Activated CD8-positive, alpha-beta T cell treated with anti-CD3 and anti-CD28 coated beads, Interleukin-2, amount 10 ng/mL, durations not matched to agents 7 days and 5 days (primary cell): ENCODE measurements at regions of chr11 and their contacts with region 1.

Region 1: DNA sequence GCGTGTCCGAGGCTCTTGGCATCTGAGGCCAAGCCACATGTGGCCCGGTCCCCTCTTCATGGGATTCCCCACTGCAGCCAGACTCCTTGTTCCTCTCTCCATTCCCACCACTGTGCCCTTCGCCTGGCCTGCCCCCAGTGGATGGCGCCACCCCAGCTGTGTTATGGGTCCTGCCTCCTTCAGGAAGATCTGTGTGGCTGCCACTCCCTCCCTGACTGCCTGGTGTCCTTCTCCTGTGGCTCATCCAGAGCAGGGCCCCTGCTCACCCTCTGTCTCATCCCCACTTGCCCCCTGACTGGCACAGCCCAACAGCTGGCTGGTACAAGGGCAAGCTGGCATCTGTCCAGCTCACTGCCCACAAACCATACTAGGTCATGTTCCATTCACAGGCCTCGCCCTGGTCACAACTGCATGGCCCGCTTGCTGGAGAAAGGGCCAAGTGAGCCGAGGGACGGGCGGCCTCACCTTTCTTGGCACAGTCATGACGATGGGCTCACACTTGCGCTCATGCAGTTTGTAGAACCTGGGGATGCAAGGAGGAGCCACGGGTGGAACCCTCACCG is 1.9 kb upstream of the PTPRCAP start:
- DNase-seq: peak; percentile 61
- ATAC-seq: no peak
- H3K4me3 Mint-ChIP-seq: peak overlapping the region; percentile 84
- H3K27ac Mint-ChIP-seq: peak overlapping the region; percentile 96
- H3K4me1 Mint-ChIP-seq: peaks cover 56% of the 10 kb centered on the region
- H3K27me3 Mint-ChIP-seq: no peaks in the 10 kb centered on the region

Region 2: DNA sequence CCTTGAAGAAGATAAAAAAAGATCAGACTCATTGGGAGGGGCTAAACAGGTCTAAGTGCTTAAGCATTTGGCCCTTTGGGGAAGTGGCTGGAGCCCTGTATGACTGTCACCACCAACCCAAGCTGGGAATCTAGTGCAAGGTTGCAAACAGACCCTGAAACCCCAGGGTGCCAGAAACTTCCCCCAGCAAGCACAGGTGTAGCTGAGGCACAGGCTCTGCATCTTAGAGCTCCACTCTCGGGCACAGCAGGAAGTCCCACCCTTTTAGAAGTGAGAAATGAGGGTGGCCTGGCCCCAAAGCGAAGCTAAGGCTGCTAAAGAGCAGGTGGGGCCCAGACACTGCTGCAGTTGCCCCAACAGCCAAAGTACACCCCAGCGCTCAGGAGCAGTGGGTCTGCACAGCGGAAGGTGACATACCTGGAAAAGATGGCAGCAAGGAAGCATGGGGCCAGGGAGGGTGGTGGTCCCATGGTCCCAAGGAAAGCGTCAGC is 326.1 kb before region 1 on chr11:
- CTCF ChIA-PET with region 1: no interaction called
- POLR2A ChIA-PET with region 1: no interaction called
- DNase-seq: peak; percentile 29
- ATAC-seq: no peak
- H3K4me3 Mint-ChIP-seq: no peak overlapping the region
- H3K27ac Mint-ChIP-seq: peak overlapping the region; percentile 52
- H3K4me1 Mint-ChIP-seq: peaks cover 20% of the 10 kb centered on the region
- H3K27me3 Mint-ChIP-seq: peaks cover 2% of the 10 kb centered on the region

Region 3: DNA sequence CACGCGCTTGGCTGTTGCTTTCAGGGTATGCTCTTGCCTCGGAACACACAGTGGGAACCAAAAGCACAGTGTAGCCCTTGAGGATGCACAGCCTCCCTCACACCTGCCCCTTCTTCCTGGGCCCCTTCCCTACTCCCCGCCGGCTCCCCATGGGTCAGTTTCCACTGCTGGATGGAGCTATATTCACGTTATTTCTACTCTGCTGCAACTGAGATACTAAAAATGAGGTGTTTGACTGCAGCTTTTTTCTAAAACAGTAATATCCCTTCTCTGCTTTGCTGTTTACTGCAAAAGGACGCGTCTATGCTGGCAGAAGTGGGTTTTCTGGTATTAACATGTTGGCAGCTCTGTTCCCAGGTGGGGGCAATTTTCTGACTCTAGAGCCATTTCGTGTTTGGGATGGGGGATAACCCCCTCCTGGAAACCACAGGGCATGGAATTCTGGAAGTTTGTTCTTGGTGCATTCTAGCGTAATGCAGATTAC is 168.3 kb before region 1 on chr11:
- CTCF ChIA-PET with region 1: no interaction called
- POLR2A ChIA-PET with region 1: no interaction called
- DNase-seq: no peak
- ATAC-seq: no peak
- H3K4me3 Mint-ChIP-seq: peak overlapping the region; percentile 98
- H3K27ac Mint-ChIP-seq: peak overlapping the region; percentile 99
- H3K4me1 Mint-ChIP-seq: peaks cover 72% of the 10 kb centered on the region
- H3K27me3 Mint-ChIP-seq: no peaks in the 10 kb centered on the region

Region 4: DNA sequence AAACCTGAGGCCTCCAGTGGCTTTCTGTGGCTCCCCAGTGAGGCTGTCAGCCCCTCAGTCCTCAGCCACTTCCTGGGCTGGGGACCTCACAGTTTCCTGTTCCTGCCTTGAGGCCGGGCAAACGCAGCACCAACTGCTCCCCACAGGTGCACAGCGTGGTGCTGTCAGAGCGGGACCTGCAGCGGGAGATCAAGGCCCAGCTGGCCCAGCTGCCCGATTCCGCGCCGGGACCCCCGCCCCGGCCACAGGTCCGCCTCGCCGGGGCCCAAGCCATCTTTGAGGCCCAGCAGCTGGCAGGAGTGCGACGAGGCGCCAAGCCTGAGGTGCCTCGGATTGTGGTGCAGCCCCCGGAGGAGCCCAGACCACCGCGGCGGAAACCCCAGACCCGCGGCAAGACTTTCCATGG is 30.1 kb before region 1 on chr11:
- CTCF ChIA-PET with region 1: interaction called, 8 read pairs
- POLR2A ChIA-PET with region 1: interaction called, 109 read pairs
- DNase-seq: peak; percentile 93
- ATAC-seq: peak; percentile 72
- H3K4me3 Mint-ChIP-seq: peak overlapping the region; percentile 92
- H3K27ac Mint-ChIP-seq: peak overlapping the region; percentile 98
- H3K4me1 Mint-ChIP-seq: peaks cover 80% of the 10 kb centered on the region
- H3K27me3 Mint-ChIP-seq: peaks cover 2% of the 10 kb centered on the region

Region 5: GRCh38 chr11:67428052-67428914 is 11.1 kb before region 1 on chr11 and contains the start of gene RPS6KB2:
- CTCF ChIA-PET with region 1: interaction called, 6 read pairs
- POLR2A ChIA-PET with region 1: interaction called, 44 read pairs
- DNase-seq: peak; percentile 100
- ATAC-seq: peak; percentile 94
- H3K4me3 Mint-ChIP-seq: peak within 1 kb of the TSS; percentile 98
- H3K27ac Mint-ChIP-seq: peak within 1 kb of the TSS; percentile 95
- H3K4me1 Mint-ChIP-seq: peaks cover 61% of the 10 kb centered on the region
- H3K27me3 Mint-ChIP-seq: no peaks in the 10 kb centered on the region
- total RNA-seq, gene RPS6KB2: 64.0 to 66.9 TPM

Region 6: GRCh38 chr11:67468835-67469811 is 29.7 kb after region 1 on chr11 and contains the start of gene TMEM134:
- CTCF ChIA-PET with region 1: interaction called, 21 read pairs
- POLR2A ChIA-PET with region 1: interaction called, 103 read pairs
- DNase-seq: peak; percentile 92
- ATAC-seq: peak; percentile 79
- H3K4me3 Mint-ChIP-seq: peak within 1 kb of the TSS; percentile 87
- H3K27ac Mint-ChIP-seq: peak within 1 kb of the TSS; percentile 83
- H3K4me1 Mint-ChIP-seq: peaks cover 37% of the 10 kb centered on the region
- H3K27me3 Mint-ChIP-seq: no peaks in the 10 kb centered on the region
- total RNA-seq, gene TMEM134: 39.6 to 42.5 TPM

Region 7: GRCh38 chr11:67507864-67508485 is 68.6 kb after region 1 on chr11 and contains the start of gene CDK2AP2:
- CTCF ChIA-PET with region 1: interaction called, 6 read pairs
- POLR2A ChIA-PET with region 1: interaction called, 11 read pairs
- DNase-seq: peak; percentile 99
- ATAC-seq: peak; percentile 83
- H3K4me3 Mint-ChIP-seq: peak within 1 kb of the TSS; percentile 89
- H3K27ac Mint-ChIP-seq: peak within 1 kb of the TSS; percentile 94
- H3K4me1 Mint-ChIP-seq: peaks cover 38% of the 10 kb centered on the region
- H3K27me3 Mint-ChIP-seq: peaks cover 8% of the 10 kb centered on the region
- total RNA-seq, gene CDK2AP2: 168 to 175 TPM

Region 8: GRCh38 chr11:67606492-67607201 is 167.2 kb after region 1 on chr11 and contains the start of gene NDUFV1:
- CTCF ChIA-PET with region 1: no interaction called
- POLR2A ChIA-PET with region 1: no interaction called
- DNase-seq: peak; percentile 98
- ATAC-seq: peak; percentile 97
- H3K4me3 Mint-ChIP-seq: peak within 1 kb of the TSS; percentile 80
- H3K27ac Mint-ChIP-seq: peak within 1 kb of the TSS; percentile 91
- H3K4me1 Mint-ChIP-seq: peaks cover 22% of the 10 kb centered on the region
- H3K27me3 Mint-ChIP-seq: peaks cover 10% of the 10 kb centered on the region
- total RNA-seq, gene NDUFV1: 250 to 258 TPM